ENCODE measurements at regions of chr6 and their contacts with region 1.

Region 1: GRCh38 chr6:158999666-159000403 is at the start of gene RSPH3:
- DNase-seq: peak; percentile 97
- H3K4me3 ChIP-seq: peak within 1 kb of the TSS; percentile 61 to 94 (median 82)
- H3K27ac ChIP-seq: peak within 1 kb of the TSS; percentile 73 to 95 (median 88)
- H3K4me1 ChIP-seq: peaks cover 11 to 35% (median 20%) of the 10 kb centered on the region in 6 donors
- H3K27me3 ChIP-seq: no peaks in the 10 kb centered on the region
- CTCF ChIP-seq: peak in 5 of 11 experiments; percentile 17 to 40 (median 20)
- POLR2A ChIP-seq: peak in 2 of 3 donors; percentile 24 to 45
- total RNA-seq, gene RSPH3: 4.3 to 7.3 (median 6.0) TPM

Region 2: GRCh38 chr6:159104163-159104925 is 104.5 kb after region 1 on chr6:
- intact Hi-C with region 1: loop called (anchors 10 kb)
- DNase-seq: peak; percentile 95
- H3K4me3 ChIP-seq: peak overlapping the region in 1 of 8 donors; percentile 11
- H3K27ac ChIP-seq: peak overlapping the region; percentile 61 to 93 (median 86)
- H3K4me1 ChIP-seq: peaks cover 29 to 89% (median 55%) of the 10 kb centered on the region in 6 donors
- H3K27me3 ChIP-seq: no peaks in the 10 kb centered on the region
- CTCF ChIP-seq: peak; percentile 89 to 98 (median 96)
- POLR2A ChIP-seq: no peak

Region 3: DNA sequence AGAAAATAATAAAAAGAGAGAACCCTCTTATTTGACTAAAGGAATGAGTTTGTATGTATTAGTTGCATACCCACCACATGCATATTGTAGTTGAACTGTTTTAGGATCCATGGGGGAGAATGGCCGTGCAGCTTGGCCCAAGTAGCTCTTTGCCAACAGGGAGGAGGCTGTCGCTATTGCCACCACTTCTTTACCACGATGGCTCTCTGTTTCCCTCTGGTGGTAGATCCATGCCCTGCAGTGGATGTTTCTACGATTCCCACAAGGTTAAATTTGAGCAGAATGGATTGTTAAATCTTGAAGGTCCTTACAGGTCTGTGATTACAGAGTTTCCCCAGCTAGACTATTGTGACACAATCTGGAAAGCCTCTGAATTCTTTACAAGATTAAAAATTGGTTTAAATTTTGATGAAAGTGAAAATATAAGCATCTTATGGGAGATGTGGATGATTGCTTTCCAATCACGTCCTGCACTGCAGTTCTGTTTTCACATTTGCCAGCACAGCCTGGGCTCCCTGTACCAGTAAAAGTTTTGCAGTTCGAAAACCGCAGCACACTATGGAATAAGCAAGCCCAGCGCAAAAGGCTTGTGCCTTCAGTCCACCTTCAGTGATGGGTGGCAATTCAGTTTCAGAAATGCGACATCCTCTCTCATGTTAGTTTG is 135.0 kb after region 1 on chr6:
- intact Hi-C with region 1: loop called (anchors 10 kb)
- DNase-seq: no peak
- H3K4me3 ChIP-seq: peak overlapping the region in 1 of 8 donors; percentile 27
- H3K27ac ChIP-seq: peak overlapping the region in 2 of 8 donors; percentile 31 to 48
- H3K4me1 ChIP-seq: peaks cover 0 to 14% (median 5%) of the 10 kb centered on the region in 6 donors
- H3K27me3 ChIP-seq: peaks cover 0 to 5% (median 0%) of the 10 kb centered on the region in 7 donors
- CTCF ChIP-seq: peak; percentile 87 to 97 (median 95)
- POLR2A ChIP-seq: no peak

Measured in spleen (tissue), 13 donors.